GM12878 (cell line): ENCODE measurements at regions of chr3 and their contacts with region 1.

Region 1: GRCh38 chr3:48400824-48401433 is 28.9 kb downstream of the FBXW12 start:
- DNase-seq: peak; percentile 26
- ATAC-seq: peak; percentile 92
- H3K4me3 ChIP-seq: no peak overlapping the region
- H3K27ac ChIP-seq: no peak overlapping the region
- H3K4me1 ChIP-seq: no peaks in the 10 kb centered on the region
- H3K27me3 ChIP-seq: no peaks in the 10 kb centered on the region
- CTCF ChIP-seq: peak; percentile 71 to 90 (median 80); a peak in 5 of 6 replicates
- EP300 ChIP-seq: no peak
- POLR2A ChIP-seq: no peak
- RAD21 ChIP-seq: peak; percentile 93

Region 2: GRCh38 chr3:47553407-47553806 is 847.5 kb before region 1 on chr3:
- CTCF ChIA-PET with region 1: no interaction called
- POLR2A ChIA-PET with region 1: no interaction called
- RAD21 ChIA-PET with region 1: no interaction called
- SMC1A ChIA-PET with region 1: no interaction called
- in situ Hi-C with region 1: no loop called
- intact Hi-C with region 1: no loop called
- DNase-seq: no peak
- ATAC-seq: no peak
- H3K4me3 ChIP-seq: no peak overlapping the region
- H3K27ac ChIP-seq: no peak overlapping the region
- H3K4me1 ChIP-seq: no peaks in the 10 kb centered on the region
- H3K27me3 ChIP-seq: no peaks in the 10 kb centered on the region
- CTCF ChIP-seq: no peak
- EP300 ChIP-seq: no peak
- POLR2A ChIP-seq: no peak
- RAD21 ChIP-seq: no peak

Region 3: GRCh38 chr3:48194446-48195071 is 206.4 kb before region 1 on chr3:
- CTCF ChIA-PET with region 1: interaction called, 23 read pairs
- POLR2A ChIA-PET with region 1: no interaction called
- RAD21 ChIA-PET with region 1: interaction called, 12 read pairs
- SMC1A ChIA-PET with region 1: interaction called, 14 read pairs
- in situ Hi-C with region 1: no loop called
- intact Hi-C with region 1: no loop called
- DNase-seq: peak; percentile 23
- ATAC-seq: peak; percentile 59
- H3K4me3 ChIP-seq: no peak overlapping the region
- H3K27ac ChIP-seq: no peak overlapping the region
- H3K4me1 ChIP-seq: no peaks in the 10 kb centered on the region
- H3K27me3 ChIP-seq: no peaks in the 10 kb centered on the region
- CTCF ChIP-seq: peak; percentile 77 to 79 (median 79); a peak in 5 of 6 replicates
- EP300 ChIP-seq: no peak
- POLR2A ChIP-seq: no peak
- RAD21 ChIP-seq: peak; percentile 87

Region 4: DNA sequence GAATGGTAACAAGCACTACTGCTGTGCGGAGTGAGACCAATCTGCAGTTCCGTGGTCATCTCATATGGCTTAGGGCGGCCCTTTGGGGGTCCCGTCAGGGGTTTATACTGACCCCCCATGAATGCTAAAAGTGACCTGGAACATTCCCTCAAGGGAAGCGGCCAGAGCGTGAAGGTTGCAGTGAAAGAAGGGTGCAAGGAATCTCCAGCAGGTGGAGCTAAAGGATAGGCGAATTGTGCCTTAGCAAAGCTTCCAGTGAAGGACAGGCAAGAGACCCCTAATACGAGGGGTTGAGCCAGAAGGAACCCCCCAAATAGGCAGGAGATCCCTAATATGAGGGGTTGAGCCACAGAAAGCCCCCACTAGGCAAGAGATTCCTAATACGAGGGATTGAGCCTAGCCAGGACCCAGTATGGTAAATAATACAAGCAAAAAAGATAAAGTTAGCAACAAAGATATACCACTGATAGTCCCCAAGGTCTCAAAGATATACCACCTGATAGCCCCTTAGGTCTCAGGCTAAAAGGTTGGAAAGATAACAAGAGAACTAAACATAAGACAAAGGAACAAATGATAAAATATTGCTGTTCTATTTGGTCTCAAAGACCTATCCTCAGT is 127.2 kb before region 1 on chr3:
- CTCF ChIA-PET with region 1: interaction called, 18 read pairs
- POLR2A ChIA-PET with region 1: no interaction called
- RAD21 ChIA-PET with region 1: interaction called, 33 read pairs
- SMC1A ChIA-PET with region 1: interaction called, 33 read pairs
- in situ Hi-C with region 1: no loop called
- intact Hi-C with region 1: loop called (anchors 1 kb)
- DNase-seq: peak; percentile 30
- ATAC-seq: peak; percentile 91
- H3K4me3 ChIP-seq: no peak overlapping the region
- H3K27ac ChIP-seq: no peak overlapping the region
- H3K4me1 ChIP-seq: no peaks in the 10 kb centered on the region
- H3K27me3 ChIP-seq: no peaks in the 10 kb centered on the region
- CTCF ChIP-seq: peak; percentile 73 to 85 (median 76)
- EP300 ChIP-seq: no peak
- POLR2A ChIP-seq: no peak
- RAD21 ChIP-seq: peak; percentile 84

Region 5: DNA sequence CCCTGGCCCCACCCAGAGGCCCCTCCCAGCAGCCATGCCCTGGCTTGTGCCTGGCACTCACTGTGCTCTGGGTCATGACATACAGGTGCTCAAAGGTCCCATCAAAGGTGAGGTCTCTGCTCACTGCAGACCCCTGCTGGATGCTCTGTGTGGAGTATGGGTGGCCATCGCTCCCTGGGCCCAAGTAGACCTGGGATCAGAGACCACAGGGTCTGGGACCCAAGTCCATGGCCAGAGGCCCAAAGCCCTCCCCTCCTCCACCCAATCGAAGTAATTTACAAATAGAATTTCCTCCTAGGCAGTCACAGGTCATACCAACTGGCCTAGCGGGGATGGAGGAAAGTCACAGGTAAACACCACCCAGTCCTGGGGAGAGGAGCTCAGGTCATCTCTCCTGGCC is 21.3 kb after region 1 on chr3:
- CTCF ChIA-PET with region 1: interaction called, 10 read pairs
- POLR2A ChIA-PET with region 1: no interaction called
- RAD21 ChIA-PET with region 1: interaction called, 7 read pairs
- SMC1A ChIA-PET with region 1: interaction called, 7 read pairs
- in situ Hi-C with region 1: no loop called
- intact Hi-C with region 1: no loop called
- DNase-seq: no peak
- ATAC-seq: peak; percentile 22; the same call in 1 of the 3 replicates
- H3K4me3 ChIP-seq: no peak overlapping the region
- H3K27ac ChIP-seq: no peak overlapping the region
- H3K4me1 ChIP-seq: peaks cover 10% of the 10 kb centered on the region
- H3K27me3 ChIP-seq: no peaks in the 10 kb centered on the region
- CTCF ChIP-seq: peak; percentile 6 to 23 (median 17); a peak in 1 of 6 replicates
- EP300 ChIP-seq: no peak
- POLR2A ChIP-seq: no peak
- RAD21 ChIP-seq: no peak

Region 6: GRCh38 chr3:48472915-48473616 is 72.1 kb after region 1 on chr3:
- CTCF ChIA-PET with region 1: interaction called, 10 read pairs
- POLR2A ChIA-PET with region 1: no interaction called
- RAD21 ChIA-PET with region 1: interaction called, 5 read pairs
- SMC1A ChIA-PET with region 1: interaction called, 5 read pairs
- in situ Hi-C with region 1: no loop called
- intact Hi-C with region 1: no loop called
- DNase-seq: peak; percentile 96
- ATAC-seq: peak; percentile 91
- H3K4me3 ChIP-seq: peak overlapping the region; percentile 71
- H3K27ac ChIP-seq: peak overlapping the region; percentile 100
- H3K4me1 ChIP-seq: peaks cover 31% of the 10 kb centered on the region
- H3K27me3 ChIP-seq: no peaks in the 10 kb centered on the region
- CTCF ChIP-seq: peak; percentile 35 to 55 (median 54); a peak in 5 of 6 replicates
- EP300 ChIP-seq: peak; percentile 59 to 64; a peak in 2 of 4 replicates
- POLR2A ChIP-seq: peak; percentile 88
- RAD21 ChIP-seq: no peak

Region 7: DNA sequence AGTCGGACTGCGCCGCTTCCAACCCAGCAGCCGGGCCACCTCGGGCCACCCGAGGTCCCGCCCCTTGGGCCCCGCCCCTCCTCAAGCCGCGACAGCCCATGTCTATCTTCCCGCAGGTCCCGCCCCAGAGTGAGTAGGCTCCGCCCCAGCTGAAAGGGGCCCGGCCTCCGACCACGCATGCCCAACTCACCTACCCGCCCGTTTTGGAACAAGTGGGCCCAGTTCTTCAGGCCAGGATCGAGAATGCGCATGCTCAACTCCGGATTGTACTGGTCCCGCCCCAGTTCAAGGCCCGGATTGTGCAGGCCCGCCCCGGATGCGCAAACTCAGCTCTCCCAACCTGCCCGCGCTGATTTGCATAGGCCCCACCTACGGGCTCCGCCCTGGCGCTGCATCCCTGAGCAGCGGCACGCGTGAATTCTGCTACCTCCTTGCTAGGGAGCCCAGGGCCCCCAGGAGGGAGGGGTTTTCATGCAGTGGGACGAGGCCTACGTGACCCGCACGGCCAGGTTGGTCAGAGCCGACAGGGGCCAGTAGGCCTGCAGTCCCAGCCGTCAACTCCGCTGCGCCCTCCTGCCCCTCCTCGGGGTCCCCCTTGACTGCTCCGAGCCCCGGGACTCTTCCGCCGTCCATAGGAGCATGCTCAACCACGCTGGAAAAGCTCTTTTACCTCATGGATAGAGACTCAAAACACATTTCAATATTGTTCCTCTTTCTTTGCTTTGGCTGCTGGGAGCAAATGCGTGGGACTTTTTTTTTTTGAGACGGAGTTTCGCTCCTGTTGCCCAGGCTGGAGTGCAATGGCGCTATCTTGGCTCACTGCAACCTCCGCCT is 156.1 kb after region 1 on chr3 and contains the start of gene PFKFB4:
- CTCF ChIA-PET with region 1: interaction called, 61 read pairs
- POLR2A ChIA-PET with region 1: no interaction called
- RAD21 ChIA-PET with region 1: interaction called, 13 read pairs
- SMC1A ChIA-PET with region 1: interaction called, 11 read pairs
- in situ Hi-C with region 1: no loop called
- intact Hi-C with region 1: no loop called
- DNase-seq: peak; percentile 99
- ATAC-seq: peak; percentile 93
- H3K4me3 ChIP-seq: peak within 1 kb of the TSS; percentile 91
- H3K27ac ChIP-seq: peak within 1 kb of the TSS; percentile 78
- H3K4me1 ChIP-seq: peaks cover 47% of the 10 kb centered on the region
- H3K27me3 ChIP-seq: no peaks in the 10 kb centered on the region
- CTCF ChIP-seq: peak in 1 of 3 experiments; percentile 11; a peak in 2 of 6 replicates
- EP300 ChIP-seq: no peak; a peak in 1 of 4 replicates
- POLR2A ChIP-seq: peak; percentile 77
- RAD21 ChIP-seq: no peak
- polyA plus RNA-seq, gene PFKFB4: 0.37 to 0.53 TPM

Region 8: GRCh38 chr3:49213541-49213943 is 812.6 kb after region 1 on chr3:
- CTCF ChIA-PET with region 1: no interaction called
- POLR2A ChIA-PET with region 1: no interaction called
- RAD21 ChIA-PET with region 1: no interaction called
- SMC1A ChIA-PET with region 1: no interaction called
- in situ Hi-C with region 1: no loop called
- intact Hi-C with region 1: no loop called
- DNase-seq: no peak
- ATAC-seq: no peak
- H3K4me3 ChIP-seq: no peak overlapping the region
- H3K27ac ChIP-seq: no peak overlapping the region
- H3K4me1 ChIP-seq: no peaks in the 10 kb centered on the region
- H3K27me3 ChIP-seq: no peaks in the 10 kb centered on the region
- CTCF ChIP-seq: no peak
- EP300 ChIP-seq: no peak
- POLR2A ChIP-seq: no peak
- RAD21 ChIP-seq: no peak